ENCODE measurements at regions of chr3 and their contacts with region 1.

Region 1: DNA sequence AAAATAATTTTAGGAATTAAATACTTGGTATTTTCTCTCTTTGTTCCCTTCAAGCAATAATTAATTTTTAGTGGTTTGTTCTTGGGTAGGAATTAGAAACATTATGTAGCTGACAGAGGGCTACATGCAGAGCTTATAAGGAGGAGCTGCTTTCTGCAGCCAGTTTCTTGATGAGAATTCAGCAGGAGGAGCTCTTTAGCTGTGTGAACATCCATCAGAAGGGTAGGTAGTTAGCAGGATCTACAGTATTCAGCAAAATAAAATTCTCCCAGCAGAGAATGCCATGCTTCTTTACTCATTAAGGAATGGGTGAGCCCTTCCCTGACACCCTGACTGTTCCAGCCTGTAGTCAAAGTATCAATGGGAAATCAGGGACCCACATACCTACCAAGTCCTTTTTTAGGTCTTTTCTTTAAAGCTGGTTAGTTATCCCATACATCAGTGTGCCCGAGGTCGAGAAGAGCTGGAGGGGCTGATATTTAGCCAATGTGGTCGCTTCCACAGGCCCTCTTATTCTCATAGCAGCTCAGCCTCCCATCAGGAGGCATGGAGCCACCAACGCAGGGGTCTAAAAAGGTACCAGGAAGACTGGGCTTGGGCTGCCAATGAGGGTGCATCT is 54.0 kb downstream of the KCNAB1 start:
- DNase-seq: peak; percentile 16
- ATAC-seq: peak; percentile 59; the same call in 1 of the 2 replicates
- H3K4me3 ChIP-seq: no peak overlapping the region
- H3K27ac ChIP-seq: no peak overlapping the region
- H3K4me1 ChIP-seq: no peaks in the 10 kb centered on the region; a peak in 1 of 4 replicates
- H3K27me3 ChIP-seq: no peaks in the 10 kb centered on the region
- CTCF ChIP-seq: peak; percentile 15 to 53 (median 29); a peak in 4 of 6 replicates
- POLR2A ChIP-seq: no peak
- RAD21 ChIP-seq: peak; percentile 72

Region 2: GRCh38 chr3:155391551-155391958 is 782.8 kb before region 1 on chr3:
- CTCF ChIA-PET with region 1: no interaction called
- POLR2A ChIA-PET with region 1: no interaction called
- RAD21 ChIA-PET with region 1: no interaction called
- intact Hi-C with region 1: no loop called
- DNase-seq: peak; percentile 23
- ATAC-seq: peak; percentile 94
- H3K4me3 ChIP-seq: peak overlapping the region in 1 of 2 experiments; percentile 22; a peak in 2 of 4 replicates
- H3K27ac ChIP-seq: no peak overlapping the region
- H3K4me1 ChIP-seq: peaks cover 12 to 15% of the 10 kb centered on the region in 2 experiments
- H3K27me3 ChIP-seq: no peaks in the 10 kb centered on the region
- CTCF ChIP-seq: no peak
- POLR2A ChIP-seq: no peak
- RAD21 ChIP-seq: no peak

Region 3: GRCh38 chr3:156145866-156146265 is 28.5 kb before region 1 on chr3:
- CTCF ChIA-PET with region 1: no interaction called
- POLR2A ChIA-PET with region 1: no interaction called
- RAD21 ChIA-PET with region 1: no interaction called
- intact Hi-C with region 1: no loop called
- DNase-seq: no peak
- ATAC-seq: no peak
- H3K4me3 ChIP-seq: no peak overlapping the region
- H3K27ac ChIP-seq: no peak overlapping the region
- H3K4me1 ChIP-seq: no peaks in the 10 kb centered on the region
- H3K27me3 ChIP-seq: no peaks in the 10 kb centered on the region
- CTCF ChIP-seq: no peak
- POLR2A ChIP-seq: no peak
- RAD21 ChIP-seq: no peak

Region 4: GRCh38 chr3:156449712-156450574 is 275.6 kb after region 1 on chr3:
- CTCF ChIA-PET with region 1: interaction called, 19 read pairs
- POLR2A ChIA-PET with region 1: no interaction called
- RAD21 ChIA-PET with region 1: no interaction called
- intact Hi-C with region 1: no loop called
- DNase-seq: peak; percentile 37
- ATAC-seq: peak; percentile 91
- H3K4me3 ChIP-seq: no peak overlapping the region
- H3K27ac ChIP-seq: no peak overlapping the region
- H3K4me1 ChIP-seq: no peaks in the 10 kb centered on the region
- H3K27me3 ChIP-seq: no peaks in the 10 kb centered on the region
- CTCF ChIP-seq: peak; percentile 47 to 74 (median 68); a peak in 5 of 6 replicates
- POLR2A ChIP-seq: no peak
- RAD21 ChIP-seq: peak; percentile 61

Region 5: DNA sequence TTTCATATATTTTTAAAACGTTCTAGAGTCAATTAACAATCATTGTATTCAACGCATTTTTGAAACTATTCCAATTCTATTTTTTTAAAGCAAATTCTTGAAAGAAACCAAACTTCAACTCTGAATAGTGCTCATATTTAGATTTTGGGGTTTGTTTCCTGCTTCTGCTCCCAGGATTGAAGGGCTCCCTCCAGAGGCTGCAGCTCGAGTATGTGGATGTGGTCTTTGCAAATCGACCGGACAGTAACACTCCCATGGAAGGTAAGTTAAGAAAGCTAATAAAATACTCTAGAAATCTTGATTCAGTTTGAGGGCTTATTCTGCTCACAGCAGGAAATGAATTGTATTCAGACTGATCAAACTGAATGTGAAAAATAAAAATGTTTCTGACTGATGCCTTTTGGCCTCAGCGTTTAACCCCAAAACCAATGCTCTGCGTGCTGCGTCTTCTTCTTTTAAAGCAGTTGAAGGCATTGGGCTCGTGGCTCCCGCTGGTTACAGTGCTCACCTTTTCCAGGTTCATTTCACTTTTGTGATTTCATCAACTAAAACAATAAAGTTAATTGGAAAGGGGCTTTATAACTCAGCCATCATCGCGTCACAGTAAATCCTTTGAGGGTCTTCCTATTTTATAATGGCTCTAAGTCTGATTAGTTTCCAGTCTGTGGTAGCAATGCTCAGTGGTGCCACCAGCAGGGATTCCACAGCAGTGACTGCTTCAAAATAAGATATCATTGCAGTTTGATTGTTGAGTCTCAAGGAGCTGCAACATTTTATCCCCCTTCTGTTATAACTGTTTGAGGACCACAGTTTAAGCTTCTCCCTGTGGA is 300.4 kb after region 1 on chr3:
- CTCF ChIA-PET with region 1: interaction called, 12 read pairs
- POLR2A ChIA-PET with region 1: no interaction called
- RAD21 ChIA-PET with region 1: no interaction called
- intact Hi-C with region 1: no loop called
- DNase-seq: no peak
- ATAC-seq: peak; percentile 83
- H3K4me3 ChIP-seq: no peak overlapping the region
- H3K27ac ChIP-seq: no peak overlapping the region
- H3K4me1 ChIP-seq: no peaks in the 10 kb centered on the region
- H3K27me3 ChIP-seq: no peaks in the 10 kb centered on the region
- CTCF ChIP-seq: peak in 2 of 3 experiments; percentile 53 to 70; a peak in 4 of 6 replicates
- POLR2A ChIP-seq: no peak
- RAD21 ChIP-seq: peak; percentile 28; the same call in 1 of the 2 replicates

Region 6: DNA sequence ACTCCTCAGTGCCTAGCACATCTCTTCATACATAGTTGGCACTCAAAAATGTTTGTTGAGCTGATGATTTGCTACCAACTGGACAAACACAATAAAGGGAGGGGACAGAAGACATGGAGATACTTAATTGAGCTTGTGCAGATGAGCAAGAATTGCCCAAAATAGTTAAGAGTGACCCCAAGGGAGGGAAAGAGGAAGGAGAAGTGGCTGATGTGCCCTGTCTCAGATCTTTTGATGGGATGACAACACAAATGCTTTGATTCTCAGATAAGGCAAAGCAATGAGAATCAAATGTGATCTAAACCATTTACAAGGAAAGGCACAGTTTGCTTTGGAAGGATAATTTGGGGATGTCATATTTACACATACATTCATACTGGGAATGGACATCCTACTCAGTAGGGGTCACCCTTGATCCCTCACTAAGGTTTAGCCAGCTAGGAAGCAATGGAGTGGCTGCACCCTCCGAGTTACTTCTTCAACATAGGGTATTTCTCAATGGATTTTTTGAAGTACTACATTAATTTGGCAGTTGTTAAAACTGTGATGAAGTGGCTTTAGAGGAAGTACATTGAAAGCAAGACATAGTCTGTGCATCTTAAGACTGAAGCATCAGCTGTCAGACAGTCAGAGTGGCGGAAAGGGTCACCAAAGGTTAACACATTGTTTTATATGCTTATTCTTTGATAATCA is 402.5 kb after region 1 on chr3:
- CTCF ChIA-PET with region 1: no interaction called
- POLR2A ChIA-PET with region 1: no interaction called
- RAD21 ChIA-PET with region 1: no interaction called
- intact Hi-C with region 1: no loop called
- DNase-seq: no peak
- ATAC-seq: no peak
- H3K4me3 ChIP-seq: no peak overlapping the region
- H3K27ac ChIP-seq: no peak overlapping the region
- H3K4me1 ChIP-seq: no peaks in the 10 kb centered on the region
- H3K27me3 ChIP-seq: no peaks in the 10 kb centered on the region
- CTCF ChIP-seq: no peak
- POLR2A ChIP-seq: no peak
- RAD21 ChIP-seq: peak; percentile 40; the same call in 1 of the 2 replicates